Panc1 (cell line): ENCODE measurements at regions of chr11 and their contacts with region 1.

Region 1: GRCh38 chr11:61627567-61628445 is 46.9 kb upstream of the SYT7 start:
- DNase-seq: no peak
- ATAC-seq: peak; percentile 90
- H3K4me3 ChIP-seq: no peak overlapping the region
- H3K27ac ChIP-seq: no peak overlapping the region
- H3K4me1 ChIP-seq: no peaks in the 10 kb centered on the region
- H3K27me3 ChIP-seq: no peaks in the 10 kb centered on the region
- CTCF ChIP-seq: peak; percentile 94

Region 2: GRCh38 chr11:61429691-61430582 is 197.9 kb before region 1 on chr11 and contains the starts of genes CPSF7 and SDHAF2:
- CTCF ChIA-PET with region 1: interaction called, 10 read pairs
- POLR2A ChIA-PET with region 1: no interaction called
- in situ Hi-C with region 1: no loop called
- intact Hi-C with region 1: no loop called
- DNase-seq: peak; percentile 48
- ATAC-seq: peak; percentile 97
- H3K4me3 ChIP-seq: peak within 1 kb of the TSS; percentile 98 to 100
- H3K27ac ChIP-seq: peak within 1 kb of the TSS; percentile 99
- H3K4me1 ChIP-seq: peaks cover 8% of the 10 kb centered on the region
- H3K27me3 ChIP-seq: no peaks in the 10 kb centered on the region
- CTCF ChIP-seq: no peak
- total RNA-seq, gene CPSF7: 96.1 TPM
- total RNA-seq, gene SDHAF2: 43.2 TPM

Region 3: DNA sequence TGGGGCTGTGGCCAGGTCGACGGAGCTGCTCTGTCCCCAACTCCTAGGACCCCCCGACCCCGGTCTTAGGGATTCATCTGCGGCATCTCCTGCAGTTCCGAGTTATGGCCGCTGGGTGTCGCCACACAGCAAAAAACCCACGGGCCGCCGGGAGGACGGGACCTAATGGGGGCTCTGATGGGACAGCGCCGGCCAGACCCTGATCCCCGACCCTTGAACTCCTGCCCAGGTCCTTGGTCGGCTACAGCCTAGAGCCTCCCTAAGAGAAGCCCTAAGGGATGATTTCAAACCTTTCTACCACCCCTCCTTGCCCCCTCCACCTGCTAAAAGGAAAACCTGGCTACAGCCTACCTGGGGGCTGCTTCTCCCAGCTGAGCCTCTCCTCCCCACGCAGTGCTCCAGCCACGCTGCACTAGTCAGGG is 150.1 kb before region 1 on chr11:
- CTCF ChIA-PET with region 1: interaction called, 3 read pairs
- POLR2A ChIA-PET with region 1: no interaction called
- in situ Hi-C with region 1: no loop called
- intact Hi-C with region 1: loop called (anchors 5 kb)
- DNase-seq: no peak
- ATAC-seq: peak; percentile 37; the same call in 1 of the 2 replicates
- H3K4me3 ChIP-seq: no peak overlapping the region
- H3K27ac ChIP-seq: no peak overlapping the region
- H3K4me1 ChIP-seq: peaks cover 3% of the 10 kb centered on the region; the same call in 1 of the 2 replicates
- H3K27me3 ChIP-seq: no peaks in the 10 kb centered on the region
- CTCF ChIP-seq: peak; percentile 96

Region 4: DNA sequence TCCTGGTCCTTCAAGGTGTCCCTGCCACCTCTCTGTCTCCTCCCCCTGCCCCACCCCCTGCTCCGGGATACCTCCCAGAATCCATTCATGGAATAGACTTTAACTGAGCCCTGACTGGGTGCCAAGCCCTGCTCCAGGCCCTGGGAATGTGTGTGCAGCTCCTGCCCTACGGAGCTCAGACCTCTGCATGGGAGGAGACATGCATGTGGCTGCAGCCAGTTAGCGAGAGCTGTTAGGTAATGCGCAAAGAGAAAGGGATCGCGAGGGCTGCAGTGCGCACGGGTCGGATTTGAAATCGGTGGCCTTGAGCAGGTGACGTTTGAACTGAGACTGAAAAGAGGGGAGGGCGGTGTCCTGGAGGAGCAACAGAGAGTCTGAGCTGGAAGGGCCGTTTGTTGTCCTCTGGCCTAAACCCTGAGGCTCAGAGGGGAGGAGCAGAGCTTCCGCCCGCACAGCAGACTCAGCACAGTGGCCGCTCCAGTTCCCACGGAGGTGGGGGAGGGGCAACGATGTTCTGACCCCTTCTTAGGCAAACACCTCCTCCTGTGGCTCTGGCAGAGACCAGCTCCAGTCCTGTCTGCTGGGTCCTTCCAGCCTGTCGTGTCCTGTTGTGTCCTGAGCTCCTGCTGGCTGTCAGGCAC is 139.0 kb before region 1 on chr11:
- CTCF ChIA-PET with region 1: interaction called, 10 read pairs
- POLR2A ChIA-PET with region 1: no interaction called
- in situ Hi-C with region 1: no loop called
- intact Hi-C with region 1: no loop called
- DNase-seq: no peak
- ATAC-seq: peak; percentile 77
- H3K4me3 ChIP-seq: peak overlapping the region; percentile 11 to 44
- H3K27ac ChIP-seq: peak overlapping the region; percentile 58
- H3K4me1 ChIP-seq: peaks cover 16% of the 10 kb centered on the region
- H3K27me3 ChIP-seq: no peaks in the 10 kb centered on the region
- CTCF ChIP-seq: no peak

Region 5: GRCh38 chr11:61581030-61581928 is 46.5 kb before region 1 on chr11 and contains the start of gene SYT7:
- CTCF ChIA-PET with region 1: no interaction called
- POLR2A ChIA-PET with region 1: no interaction called
- in situ Hi-C with region 1: no loop called
- intact Hi-C with region 1: loop called (anchors 2 kb)
- DNase-seq: peak; percentile 63
- ATAC-seq: peak; percentile 91
- H3K4me3 ChIP-seq: peak within 1 kb of the TSS; percentile 41 to 47
- H3K27ac ChIP-seq: no peak within 1 kb of the TSS
- H3K4me1 ChIP-seq: no peaks in the 10 kb centered on the region
- H3K27me3 ChIP-seq: peaks cover 6% of the 10 kb centered on the region; the same call in 1 of the 2 replicates
- CTCF ChIP-seq: peak; percentile 75
- total RNA-seq, gene SYT7: 2.5 TPM

Region 6: GRCh38 chr11:61718621-61719302 is 91.0 kb after region 1 on chr11:
- CTCF ChIA-PET with region 1: no interaction called
- POLR2A ChIA-PET with region 1: no interaction called
- in situ Hi-C with region 1: no loop called
- intact Hi-C with region 1: no loop called
- DNase-seq: no peak
- ATAC-seq: no peak; the same call in 1 of the 2 replicates
- H3K4me3 ChIP-seq: peak overlapping the region in 1 of 2 experiments; percentile 24; a peak in 1 of 4 replicates
- H3K27ac ChIP-seq: no peak overlapping the region
- H3K4me1 ChIP-seq: 0 out of 2 replicates have a peak, but pooled peaks cover 7% of the 10 kb centered on the region
- H3K27me3 ChIP-seq: no peaks in the 10 kb centered on the region
- CTCF ChIP-seq: no peak